HCT116 (cell line): ENCODE measurements at regions of chr3 and their contacts with region 1.

Region 1: GRCh38 chr3:154334973-154335420 is 10.7 kb upstream of the DHX36 start:
- DNase-seq: no peak
- ATAC-seq: peak; percentile 59; the same call in 1 of the 2 replicates
- H3K4me3 ChIP-seq: no peak overlapping the region
- H3K27ac ChIP-seq: no peak overlapping the region
- H3K4me1 ChIP-seq: no peaks in the 10 kb centered on the region
- H3K27me3 ChIP-seq: no peaks in the 10 kb centered on the region
- CTCF ChIP-seq: peak; percentile 42 to 53 (median 49); a peak in 5 of 6 replicates
- POLR2A ChIP-seq: no peak
- RAD21 ChIP-seq: peak; percentile 68

Region 2: DNA sequence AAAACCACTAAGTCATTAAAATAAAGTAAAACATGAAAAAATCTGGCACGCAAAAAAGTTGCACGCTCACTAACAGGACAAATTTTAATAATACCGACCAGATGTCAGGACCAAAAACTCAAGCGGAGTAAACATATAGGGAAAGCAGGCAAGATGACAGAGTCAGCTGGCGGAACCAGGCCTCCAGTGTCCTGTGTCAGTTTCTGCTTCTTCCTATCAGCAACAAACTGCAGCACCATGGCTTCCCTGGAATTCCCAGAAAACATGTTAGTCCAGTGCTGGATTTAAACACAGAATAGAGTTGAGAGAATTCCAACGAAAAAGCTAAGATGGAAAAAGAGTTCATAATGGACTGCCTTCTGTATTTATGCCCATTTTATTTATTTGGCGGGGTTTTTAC is 382.9 kb before region 1 on chr3:
- CTCF ChIA-PET with region 1: no interaction called
- POLR2A ChIA-PET with region 1: no interaction called
- RAD21 ChIA-PET with region 1: no interaction called
- intact Hi-C with region 1: no loop called
- DNase-seq: no peak
- ATAC-seq: no peak
- H3K4me3 ChIP-seq: no peak overlapping the region
- H3K27ac ChIP-seq: no peak overlapping the region
- H3K4me1 ChIP-seq: no peaks in the 10 kb centered on the region
- H3K27me3 ChIP-seq: no peaks in the 10 kb centered on the region
- CTCF ChIP-seq: no peak
- POLR2A ChIP-seq: no peak
- RAD21 ChIP-seq: no peak

Region 3: GRCh38 chr3:154745960-154746359 is 411.0 kb after region 1 on chr3:
- CTCF ChIA-PET with region 1: no interaction called
- POLR2A ChIA-PET with region 1: no interaction called
- RAD21 ChIA-PET with region 1: no interaction called
- intact Hi-C with region 1: loop called (anchors 5 kb)
- DNase-seq: no peak
- ATAC-seq: no peak
- H3K4me3 ChIP-seq: no peak overlapping the region
- H3K27ac ChIP-seq: no peak overlapping the region
- H3K4me1 ChIP-seq: no peaks in the 10 kb centered on the region
- H3K27me3 ChIP-seq: no peaks in the 10 kb centered on the region
- CTCF ChIP-seq: peak in 2 of 3 experiments; percentile 9 to 17; a peak in 1 of 6 replicates
- POLR2A ChIP-seq: no peak
- RAD21 ChIP-seq: peak; percentile 47